Gastrocnemius medialis (tissue), 4 donors: ENCODE measurements at regions of chrX and their contacts with region 1.

Region 1: DNA sequence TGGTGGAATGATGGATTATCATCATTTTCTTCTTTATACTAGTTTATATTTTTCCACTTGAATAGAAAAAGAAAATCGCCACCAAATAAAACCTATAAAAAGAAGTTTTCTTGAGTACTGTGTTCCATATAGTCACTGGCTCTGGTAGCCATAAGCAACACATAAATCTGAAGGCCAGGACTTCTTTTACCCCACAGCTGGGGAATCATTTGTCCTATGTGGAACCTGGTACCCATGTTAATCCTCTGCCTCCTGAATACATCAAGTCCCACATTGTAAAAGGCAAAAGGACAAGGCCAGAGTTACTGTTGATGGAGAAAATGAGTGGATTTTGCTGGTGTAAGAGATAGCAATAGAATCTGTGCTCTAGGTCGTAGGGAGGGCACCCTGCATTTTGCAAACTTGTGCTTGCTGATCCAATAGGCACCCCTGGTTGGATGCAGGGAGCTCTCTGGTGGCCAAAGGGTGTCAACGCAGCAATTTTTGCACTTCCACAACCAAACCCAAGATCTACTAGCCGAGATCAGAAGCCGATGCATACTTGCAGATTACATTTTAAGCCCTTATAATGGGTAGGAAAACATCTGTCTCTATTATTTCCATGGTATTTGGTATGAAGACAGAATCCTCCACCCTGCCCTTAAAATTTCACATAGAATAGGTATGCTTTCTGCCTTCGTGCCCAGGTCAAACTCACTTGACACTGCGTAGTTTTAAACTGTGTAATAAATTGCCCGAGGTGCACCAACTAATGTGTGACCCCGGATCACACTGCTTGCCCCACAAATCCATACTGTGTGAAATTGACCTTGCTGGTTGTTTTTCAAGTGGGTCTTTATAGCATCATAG is 146.2 kb upstream of the SCML1 start:
- DNase-seq: peak; percentile 9 to 41
- ATAC-seq: peak; percentile 85 to 86
- H3K4me3 ChIP-seq: no peak overlapping the region
- H3K27ac ChIP-seq: peak overlapping the region in 3 of 4 donors; percentile 7 to 62 (median 57)
- H3K4me1 ChIP-seq: peaks cover 0 to 5% of the 10 kb centered on the region in 2 donors
- H3K27me3 ChIP-seq: no peaks in the 10 kb centered on the region
- CTCF ChIP-seq: peak; percentile 31 to 71 (median 47)
- POLR2A ChIP-seq: no peak

Region 2: DNA sequence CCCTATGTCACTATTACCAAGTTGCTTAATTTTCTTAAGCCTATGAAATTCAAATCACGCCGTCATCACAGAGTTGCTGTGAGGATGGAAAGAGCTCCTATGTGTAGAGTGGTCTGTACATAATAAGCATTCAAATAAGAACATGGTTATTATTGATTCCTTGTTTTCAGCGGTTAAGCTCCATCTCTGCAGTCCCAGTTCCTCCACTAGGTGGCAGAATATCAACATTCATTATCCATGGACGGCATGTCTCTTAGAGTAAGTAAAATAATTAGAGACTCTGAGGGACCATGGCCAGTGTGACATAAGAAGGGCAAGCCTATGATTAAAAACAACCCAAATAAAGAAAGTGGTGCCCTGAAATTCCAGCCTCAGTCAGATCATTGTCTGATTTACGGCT is 348.6 kb before region 1 on chrX:
- in situ Hi-C with region 1: loop called in 2 of 4 experiments (anchors 25 kb)
- intact Hi-C with region 1: no loop called
- DNase-seq: peak in 1 of 2 donors; percentile 10
- ATAC-seq: no peak
- H3K4me3 ChIP-seq: no peak overlapping the region
- H3K27ac ChIP-seq: no peak overlapping the region
- H3K4me1 ChIP-seq: no peaks in the 10 kb centered on the region
- H3K27me3 ChIP-seq: no peaks in the 10 kb centered on the region
- CTCF ChIP-seq: peak; percentile 33 to 72 (median 59)
- POLR2A ChIP-seq: no peak

Region 3: DNA sequence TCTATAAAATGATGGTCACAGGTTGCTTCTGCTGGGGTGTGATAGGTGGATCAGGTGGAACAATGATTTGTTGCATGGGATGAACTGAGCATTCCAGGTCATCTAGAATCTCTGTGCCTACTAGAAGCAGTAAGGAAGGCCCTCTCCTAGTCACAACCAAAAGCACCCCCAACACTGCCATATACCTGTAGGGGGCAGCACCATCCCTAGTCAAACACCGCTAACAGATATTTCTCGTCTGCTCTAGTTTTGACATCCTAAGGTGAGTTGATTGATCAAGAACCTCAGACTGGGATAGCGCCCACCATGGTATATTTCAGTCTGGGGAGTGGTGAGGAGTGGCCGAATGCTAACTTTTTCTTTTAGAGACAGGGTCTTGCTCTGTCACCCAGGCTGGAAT is 55.9 kb before region 1 on chrX:
- in situ Hi-C with region 1: no loop called
- intact Hi-C with region 1: loop called (anchors 1 kb)
- DNase-seq: peak in 1 of 2 donors; percentile 11
- ATAC-seq: no peak
- H3K4me3 ChIP-seq: no peak overlapping the region
- H3K27ac ChIP-seq: no peak overlapping the region
- H3K4me1 ChIP-seq: no peaks in the 10 kb centered on the region
- H3K27me3 ChIP-seq: no peaks in the 10 kb centered on the region
- CTCF ChIP-seq: peak in 3 of 5 experiments; percentile 7 to 48 (median 33)
- POLR2A ChIP-seq: no peak